ENCODE measurements at regions of chr7 and their contacts with region 1.

Region 1: GRCh38 chr7:106659963-106660861 is 746 bp downstream of the CCDC71L start:
- DNase-seq: no peak
- H3K4me3 ChIP-seq: peak overlapping the region; percentile 83
- CTCF ChIP-seq: peak; percentile 82

Region 2: DNA sequence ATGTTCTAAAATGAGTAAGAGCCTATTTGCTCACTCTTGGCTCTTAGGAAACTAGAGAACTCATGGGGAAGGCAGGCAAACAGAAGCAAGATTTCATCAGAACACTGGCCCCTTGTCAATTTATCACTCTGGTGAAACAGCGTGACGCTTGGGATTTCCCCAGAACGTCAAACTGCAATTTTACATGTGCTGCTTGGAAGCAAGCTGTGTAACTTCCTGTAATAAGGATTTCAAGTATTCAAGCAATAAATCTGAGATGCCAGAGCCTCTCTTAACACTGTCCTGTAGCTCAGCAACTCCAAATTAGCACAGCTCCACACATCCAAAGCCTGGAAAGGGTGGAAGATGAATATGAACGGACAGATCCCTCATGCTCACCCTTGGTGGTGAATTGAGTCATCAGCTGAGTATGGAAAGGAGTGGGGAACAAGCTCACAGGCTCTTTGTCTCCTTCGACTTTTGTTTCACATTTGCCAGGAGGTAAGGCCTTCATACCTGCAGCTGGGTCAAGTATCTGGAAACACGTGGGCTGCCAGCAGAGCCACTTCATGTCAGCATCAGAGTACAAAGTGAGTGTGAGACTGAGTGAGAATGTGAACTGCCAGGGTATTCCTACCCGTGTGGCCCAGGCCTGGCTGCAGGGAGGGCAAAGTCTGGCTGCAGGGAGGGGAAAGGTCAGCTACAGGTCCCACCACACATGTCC is 235.0 kb before region 1 on chr7:
- CTCF ChIA-PET with region 1: no interaction called
- POLR2A ChIA-PET with region 1: no interaction called
- DNase-seq: peak; percentile 100
- H3K4me3 ChIP-seq: peak overlapping the region; percentile 1; the same call in 1 of the 2 replicates
- CTCF ChIP-seq: no peak

Region 3: DNA sequence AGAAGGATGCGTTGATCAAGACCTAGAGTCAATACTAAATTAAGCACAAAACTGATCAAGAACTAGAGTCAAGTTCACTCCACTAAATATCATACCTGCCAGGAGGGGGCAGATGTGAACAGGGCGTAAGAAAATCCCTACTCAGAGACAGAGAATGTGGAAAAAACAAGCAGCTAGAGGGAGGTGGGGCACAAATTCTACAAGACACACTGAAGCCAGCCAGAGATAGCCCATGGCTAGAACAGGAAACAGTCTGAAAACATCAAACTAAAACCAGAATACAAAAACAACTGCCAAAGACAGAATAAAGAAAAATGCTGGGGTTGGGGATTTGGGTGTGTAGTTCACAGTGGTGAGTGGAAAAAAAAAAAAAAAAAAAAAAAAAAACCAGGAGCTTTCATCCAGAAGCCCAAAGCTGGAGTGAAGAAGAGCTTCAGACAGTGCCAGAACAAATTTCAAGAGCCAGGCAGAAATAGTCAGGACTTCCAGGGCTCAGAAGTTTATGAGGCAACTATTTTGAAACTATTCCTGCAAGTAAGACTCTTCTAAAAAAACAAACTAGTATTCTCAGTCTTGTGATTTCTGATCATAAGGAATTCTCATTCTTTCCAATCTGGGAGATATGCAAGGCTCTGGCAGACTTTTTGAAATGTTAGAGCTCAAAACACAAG is 117.5 kb before region 1 on chr7:
- CTCF ChIA-PET with region 1: interaction called, 54 read pairs
- POLR2A ChIA-PET with region 1: interaction called, 3 read pairs
- DNase-seq: peak; percentile 70
- H3K4me3 ChIP-seq: no peak overlapping the region
- CTCF ChIP-seq: peak; percentile 55

Region 4: GRCh38 chr7:106644999-106645398 is 15.2 kb before region 1 on chr7:
- CTCF ChIA-PET with region 1: interaction called, 20 read pairs
- POLR2A ChIA-PET with region 1: no interaction called
- DNase-seq: no peak
- H3K4me3 ChIP-seq: no peak overlapping the region
- CTCF ChIP-seq: no peak

Region 5: GRCh38 chr7:106681815-106682495 is 21.7 kb after region 1 on chr7:
- CTCF ChIA-PET with region 1: interaction called, 11 read pairs
- POLR2A ChIA-PET with region 1: no interaction called
- DNase-seq: no peak
- H3K4me3 ChIP-seq: no peak overlapping the region
- CTCF ChIP-seq: no peak

Region 6: GRCh38 chr7:106717955-106718871 is 58.0 kb after region 1 on chr7:
- CTCF ChIA-PET with region 1: interaction called, 11 read pairs
- POLR2A ChIA-PET with region 1: no interaction called
- DNase-seq: peak; percentile 98
- H3K4me3 ChIP-seq: no peak overlapping the region
- CTCF ChIP-seq: no peak

Region 7: GRCh38 chr7:106731187-106731586 is 71.0 kb after region 1 on chr7:
- CTCF ChIA-PET with region 1: interaction called, 89 read pairs
- POLR2A ChIA-PET with region 1: interaction called, 3 read pairs
- DNase-seq: no peak
- H3K4me3 ChIP-seq: no peak overlapping the region
- CTCF ChIP-seq: no peak

Region 8: DNA sequence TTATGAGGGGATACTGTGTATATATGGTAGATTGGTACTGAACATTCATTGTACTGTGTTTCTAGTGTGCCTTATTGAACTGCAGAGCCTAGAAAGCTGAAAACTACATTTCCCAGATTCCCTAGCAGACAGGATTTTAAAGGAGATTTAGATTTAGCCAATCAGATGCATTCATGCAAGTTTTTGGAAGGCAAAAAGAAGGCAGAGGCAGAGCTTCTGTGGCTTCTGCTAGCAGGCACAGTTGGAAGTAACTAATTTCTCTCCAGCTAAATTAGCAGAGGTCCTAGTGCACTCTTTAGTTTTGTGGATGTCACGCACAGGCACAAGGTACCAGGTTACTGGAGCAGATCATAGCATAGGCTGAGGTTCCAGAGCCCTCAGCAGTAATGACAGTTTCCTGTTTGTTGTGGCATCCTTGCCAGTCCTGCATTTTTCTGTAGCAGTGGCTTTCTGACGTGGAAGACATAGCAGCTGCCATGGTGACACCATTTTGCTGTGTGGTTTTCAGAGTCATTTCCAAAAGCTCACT is 84.4 kb after region 1 on chr7:
- CTCF ChIA-PET with region 1: interaction called, 20 read pairs
- POLR2A ChIA-PET with region 1: no interaction called
- DNase-seq: no peak
- H3K4me3 ChIP-seq: no peak overlapping the region
- CTCF ChIP-seq: no peak

Region 9: GRCh38 chr7:107025449-107026103 is 365.4 kb after region 1 on chr7:
- CTCF ChIA-PET with region 1: no interaction called
- POLR2A ChIA-PET with region 1: no interaction called
- DNase-seq: no peak
- H3K4me3 ChIP-seq: no peak overlapping the region
- CTCF ChIP-seq: no peak

Measured in AG04449 (cell line).